Posterior vena cava (tissue), 2 donors: ENCODE measurements at regions of chr9 and their contacts with region 1.

Region 1: DNA sequence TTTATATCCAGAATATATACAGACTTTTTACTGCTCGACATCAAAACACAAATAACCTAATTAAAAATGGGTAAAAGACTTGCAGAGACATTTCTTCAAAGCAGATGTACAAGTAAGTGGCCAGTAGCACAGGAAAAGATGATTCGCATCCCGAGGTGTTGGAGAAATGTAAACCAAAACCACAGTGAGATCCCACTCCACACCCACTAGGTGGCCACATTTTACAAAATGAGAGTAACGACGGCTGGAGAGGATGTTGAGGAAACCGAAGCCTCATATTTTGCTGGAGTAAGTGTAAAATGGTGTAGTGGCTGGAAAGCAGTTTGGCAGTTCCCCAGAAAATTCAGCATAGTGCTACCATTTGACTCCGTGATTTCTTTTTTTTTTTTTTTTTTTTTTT is 21.2 kb upstream of the GBGT1 start:
- DNase-seq: no peak

Region 2: DNA sequence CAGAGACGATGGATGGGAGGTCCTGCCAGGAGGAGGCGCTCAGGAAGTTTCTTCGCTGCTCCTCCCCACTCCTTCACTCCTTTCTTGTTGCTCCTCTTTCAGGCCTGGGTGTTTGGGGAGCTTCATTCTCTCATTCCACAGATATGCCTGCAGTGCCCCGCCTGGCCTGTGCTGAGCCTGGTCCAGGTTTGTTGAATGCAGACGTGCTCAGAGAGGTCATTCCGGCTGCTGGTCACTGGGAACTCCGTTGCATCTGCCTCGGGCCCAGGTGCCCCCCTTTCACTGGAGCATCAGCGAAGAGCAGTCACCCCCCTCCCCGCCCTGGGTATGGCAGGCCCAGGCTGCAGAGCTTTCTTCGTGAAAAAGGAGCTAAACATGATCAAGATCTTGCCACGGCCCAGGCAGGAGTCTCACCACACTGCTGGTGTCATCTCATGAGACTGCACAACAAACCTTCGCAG is 135.5 kb after region 1 on chr9:
- intact Hi-C with region 1: loop called in 1 of 2 experiments (anchors 10 kb)
- DNase-seq: no peak

Region 3: DNA sequence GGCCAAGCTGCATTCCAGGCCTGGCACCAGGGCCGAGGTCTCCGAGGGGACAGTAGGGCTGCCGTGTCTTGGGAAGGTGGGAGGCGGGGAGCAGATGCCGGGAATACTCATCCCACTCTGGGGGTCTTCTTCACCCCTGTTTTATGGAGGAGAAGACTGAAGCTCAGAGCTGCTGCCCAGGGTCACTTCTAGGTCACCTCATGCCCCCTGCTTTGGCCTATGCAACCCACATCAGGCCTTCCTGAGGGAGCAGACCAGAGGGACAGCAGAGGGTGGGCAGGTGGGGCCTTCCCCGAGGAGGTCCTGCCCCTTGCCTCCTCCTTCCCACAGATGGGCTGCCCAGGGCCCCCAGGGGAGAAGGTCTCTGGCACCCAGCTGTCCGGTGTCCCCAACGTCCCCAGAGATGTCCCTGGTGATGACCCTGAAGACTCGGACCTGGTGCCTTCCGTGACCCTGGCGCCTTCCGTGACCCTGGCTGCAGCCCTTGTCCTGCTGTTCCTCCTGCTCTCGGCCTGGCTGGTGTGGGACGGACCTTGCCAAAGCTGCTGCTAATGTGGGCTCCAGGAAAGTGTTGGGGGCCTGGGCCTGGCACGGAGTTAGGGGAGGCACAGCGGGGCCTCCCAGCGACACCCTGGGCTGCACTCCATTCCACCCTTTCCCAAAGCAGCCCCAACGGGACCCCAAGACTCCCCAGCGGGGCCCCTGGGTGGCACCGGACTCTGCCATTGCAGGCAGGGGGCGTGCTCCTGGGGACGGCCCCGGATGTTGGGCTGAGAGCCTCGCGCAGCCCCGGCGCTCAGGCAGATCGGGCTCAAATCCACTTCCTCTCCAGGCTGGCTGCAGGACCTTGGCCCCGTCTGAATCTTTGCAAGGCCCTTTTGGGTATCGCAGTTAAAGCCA is 300.6 kb after region 1 on chr9:
- intact Hi-C with region 1: loop called (anchors 5 kb)
- DNase-seq: peak; percentile 79

Region 4: GRCh38 chr9:133492061-133493021 is 307.4 kb after region 1 on chr9:
- intact Hi-C with region 1: loop called (anchors 5 kb)
- DNase-seq: peak; percentile 79